Heart right ventricle (tissue), 16 donors: ENCODE measurements at regions of chr12 and their contacts with region 1.

Region 1: DNA sequence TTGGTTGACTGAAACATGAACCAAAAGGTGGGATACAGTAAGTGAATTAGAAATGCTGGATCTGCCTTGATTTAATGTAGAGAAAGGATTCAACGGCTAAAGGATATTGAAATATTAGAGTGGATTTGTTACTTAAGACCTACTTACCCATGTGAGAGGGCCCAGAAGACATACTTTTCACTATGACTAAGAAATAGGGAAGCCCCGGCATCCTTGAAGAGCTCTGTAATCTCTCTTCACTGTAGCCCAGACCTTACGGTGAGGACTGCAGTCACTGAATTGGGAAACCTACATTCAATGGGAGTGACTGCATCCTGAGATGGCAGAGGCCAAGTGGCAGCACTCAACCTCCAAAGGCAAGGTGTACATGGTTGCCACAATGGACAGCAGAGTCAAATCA is 52.5 kb downstream of the KANSL2 start:
- DNase-seq: no peak
- ATAC-seq: no peak
- H3K4me3 ChIP-seq: no peak overlapping the region
- H3K27ac ChIP-seq: no peak overlapping the region
- H3K4me1 ChIP-seq: no peaks in the 10 kb centered on the region
- H3K27me3 ChIP-seq: peaks cover 0 to 34% (median 20%) of the 10 kb centered on the region in 7 donors
- CTCF ChIP-seq: no peak

Region 2: GRCh38 chr12:48183091-48183875 is 446.3 kb before region 1 on chr12 and contains the start of gene CCDC184:
- intact Hi-C with region 1: loop called in 1 of 10 experiments (anchors 10 kb)
- DNase-seq: peak; percentile 62 to 75
- ATAC-seq: peak; percentile 78 to 89 (median 84)
- H3K4me3 ChIP-seq: peak within 1 kb of the TSS; percentile 48 to 89 (median 70)
- H3K27ac ChIP-seq: peak within 1 kb of the TSS in 9 of 10 donors; percentile 7 to 54 (median 50)
- H3K4me1 ChIP-seq: peaks cover 0 to 27% (median 22%) of the 10 kb centered on the region in 9 donors
- H3K27me3 ChIP-seq: peaks cover 0 to 75% (median 56%) of the 10 kb centered on the region in 7 donors
- CTCF ChIP-seq: peak in 5 of 9 donors; percentile 33 to 61 (median 50)
- total RNA-seq, gene CCDC184: 0.11 to 1.5 (median 0.42) TPM

Region 3: DNA sequence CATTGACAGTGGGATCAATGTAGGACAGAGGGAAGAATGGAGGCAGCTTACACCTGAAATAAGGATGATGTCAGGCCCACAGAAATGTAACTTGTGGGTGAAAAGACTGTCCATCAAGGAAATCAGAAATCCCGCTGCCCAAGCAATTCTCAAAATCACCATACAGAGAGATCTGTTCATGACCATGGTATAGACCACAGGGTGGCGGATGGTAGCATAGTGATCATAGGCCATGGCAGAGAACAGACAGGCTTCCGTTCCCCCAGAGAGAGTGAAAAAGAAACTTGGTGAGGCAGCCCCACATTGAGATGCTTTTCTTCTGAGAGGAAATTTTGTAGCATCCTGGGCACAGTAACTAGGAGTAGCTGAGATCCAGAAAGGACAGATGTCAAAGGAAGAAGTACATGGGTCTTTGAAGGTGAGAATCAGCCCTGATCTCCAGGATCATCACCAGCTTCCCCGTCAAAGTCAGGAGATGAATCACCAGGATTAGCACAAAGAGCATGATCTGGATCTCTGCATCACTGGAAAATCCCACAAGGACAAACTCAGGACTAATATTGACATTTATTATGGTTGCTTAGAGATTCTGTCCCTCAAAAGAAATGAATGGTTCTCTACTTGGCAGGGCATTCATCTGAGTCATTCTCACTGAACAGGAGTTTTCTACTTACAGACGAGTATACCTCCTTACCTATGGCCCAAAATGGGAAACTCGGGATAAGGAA is 273.3 kb before region 1 on chr12:
- intact Hi-C with region 1: no loop called
- DNase-seq: no peak
- ATAC-seq: no peak
- H3K4me3 ChIP-seq: no peak overlapping the region
- H3K27ac ChIP-seq: no peak overlapping the region
- H3K4me1 ChIP-seq: peaks cover 0 to 15% (median 8%) of the 10 kb centered on the region in 9 donors
- H3K27me3 ChIP-seq: no peaks in the 10 kb centered on the region
- CTCF ChIP-seq: no peak